PC-3 (cell line): ENCODE measurements at regions of chr4 and their contacts with region 1.

Region 1: GRCh38 chr4:55269995-55270394 is 76.0 kb upstream of the SRD5A3 start:
- DNase-seq: no peak
- ATAC-seq: no peak
- H3K4me3 ChIP-seq: no peak overlapping the region
- H3K27ac ChIP-seq: no peak overlapping the region
- H3K4me1 ChIP-seq: no peaks in the 10 kb centered on the region
- H3K27me3 ChIP-seq: peaks cover 60% of the 10 kb centered on the region
- CTCF ChIP-seq: no peak

Region 2: GRCh38 chr4:55214172-55214571 is 55.8 kb before region 1 on chr4:
- CTCF ChIA-PET with region 1: no interaction called
- POLR2A ChIA-PET with region 1: no interaction called
- intact Hi-C with region 1: loop called (anchors 10 kb)
- DNase-seq: peak; percentile 50
- ATAC-seq: no peak
- H3K4me3 ChIP-seq: no peak overlapping the region
- H3K27ac ChIP-seq: no peak overlapping the region
- H3K4me1 ChIP-seq: 0 out of 2 replicates have a peak, but pooled peaks cover 5% of the 10 kb centered on the region
- H3K27me3 ChIP-seq: no peaks in the 10 kb centered on the region
- CTCF ChIP-seq: no peak

Region 3: GRCh38 chr4:55491486-55491885 is 221.5 kb after region 1 on chr4:
- CTCF ChIA-PET with region 1: no interaction called
- POLR2A ChIA-PET with region 1: no interaction called
- intact Hi-C with region 1: no loop called
- DNase-seq: no peak
- ATAC-seq: no peak
- H3K4me3 ChIP-seq: no peak overlapping the region
- H3K27ac ChIP-seq: no peak overlapping the region
- H3K4me1 ChIP-seq: peaks cover 9% of the 10 kb centered on the region
- H3K27me3 ChIP-seq: no peaks in the 10 kb centered on the region
- CTCF ChIP-seq: no peak